Activated naive CD4-positive, alpha-beta T cell treated with anti-CD3 and anti-CD28 coated beads, Interleukin-2, amount 10 ng/mL, durations not matched to agents 7 days and 5 days (primary cell): ENCODE measurements at regions of chr10 and their contacts with region 1.

Region 1: GRCh38 chr10:104080762-104081161 is 4.9 kb downstream of the COL17A1 start:
- DNase-seq: peak; percentile 31
- H3K4me3 Mint-ChIP-seq: no peak overlapping the region
- H3K27ac Mint-ChIP-seq: no peak overlapping the region
- H3K4me1 Mint-ChIP-seq: no peaks in the 10 kb centered on the region
- H3K27me3 Mint-ChIP-seq: peaks cover 5% of the 10 kb centered on the region

Region 2: GRCh38 chr10:104096692-104097091 is 15.9 kb after region 1 on chr10:
- CTCF ChIA-PET with region 1: no interaction called
- DNase-seq: no peak
- H3K4me3 Mint-ChIP-seq: no peak overlapping the region
- H3K27ac Mint-ChIP-seq: no peak overlapping the region
- H3K4me1 Mint-ChIP-seq: no peaks in the 10 kb centered on the region
- H3K27me3 Mint-ChIP-seq: peaks cover 8% of the 10 kb centered on the region

Region 3: GRCh38 chr10:104121520-104122224 is 40.9 kb after region 1 on chr10 and contains the start of gene SFR1:
- CTCF ChIA-PET with region 1: interaction called, 10 read pairs
- DNase-seq: peak; percentile 99
- H3K4me3 Mint-ChIP-seq: peak within 1 kb of the TSS; percentile 82
- H3K27ac Mint-ChIP-seq: peak within 1 kb of the TSS; percentile 98
- H3K4me1 Mint-ChIP-seq: peaks cover 39% of the 10 kb centered on the region
- H3K27me3 Mint-ChIP-seq: peaks cover 15% of the 10 kb centered on the region